ENCODE measurements at regions of chr3 and their contacts with region 1.

Region 1: GRCh38 chr3:114418724-114419543 is 125.1 kb downstream of the TIGIT start:
- DNase-seq: no peak
- H3K4me3 Mint-ChIP-seq: no peak overlapping the region
- H3K27ac Mint-ChIP-seq: peak overlapping the region; percentile 43
- H3K4me1 Mint-ChIP-seq: peaks cover 20% of the 10 kb centered on the region
- H3K27me3 Mint-ChIP-seq: peaks cover 5% of the 10 kb centered on the region

Region 2: DNA sequence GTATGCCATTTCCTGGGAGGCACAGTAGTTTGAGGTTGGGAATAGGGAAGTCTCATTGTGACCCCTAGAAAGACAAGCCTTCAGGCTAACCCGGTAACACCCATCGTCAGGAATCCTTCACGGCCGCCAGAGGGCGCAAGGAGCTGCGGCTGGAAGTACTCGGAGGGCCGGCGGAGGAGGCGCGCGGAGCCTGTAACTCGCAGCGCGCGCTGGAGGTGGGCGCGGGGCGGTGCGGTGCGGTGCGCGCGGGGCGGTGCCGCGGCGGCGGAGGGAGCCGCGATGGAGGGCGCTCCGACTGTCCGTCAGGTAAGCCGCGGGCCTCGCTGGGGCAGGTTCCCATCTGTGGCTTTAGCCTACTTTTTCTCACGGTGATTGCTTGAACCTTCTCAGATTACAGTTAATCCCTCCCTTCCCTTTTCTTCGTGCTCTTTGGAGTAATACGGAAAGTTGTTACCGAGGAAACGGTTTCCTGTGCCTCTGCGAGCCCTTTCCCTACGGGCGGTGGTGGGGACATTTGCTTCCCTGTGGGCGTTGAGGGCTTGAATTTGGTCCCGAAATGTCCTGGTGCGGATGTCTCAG is 580.2 kb before region 1 on chr3 and contains the start of gene GRAMD1C:
- intact Hi-C with region 1: loop called (anchors 2 kb)
- DNase-seq: peak; percentile 79
- H3K4me3 Mint-ChIP-seq: peak within 1 kb of the TSS; percentile 79
- H3K27ac Mint-ChIP-seq: no peak within 1 kb of the TSS
- H3K4me1 Mint-ChIP-seq: peaks cover 8% of the 10 kb centered on the region
- H3K27me3 Mint-ChIP-seq: peaks cover 12% of the 10 kb centered on the region
- total RNA-seq, gene GRAMD1C: 0.05 TPM in 1 of 2 replicates, not detected in the other

Region 3: GRCh38 chr3:114152519-114153151 is 266.3 kb before region 1 on chr3:
- intact Hi-C with region 1: loop called (anchors 1 kb)
- DNase-seq: peak; percentile 52
- H3K4me3 Mint-ChIP-seq: peak overlapping the region; percentile 21
- H3K27ac Mint-ChIP-seq: no peak overlapping the region
- H3K4me1 Mint-ChIP-seq: no peaks in the 10 kb centered on the region
- H3K27me3 Mint-ChIP-seq: peaks cover 8% of the 10 kb centered on the region

Region 4: GRCh38 chr3:114290911-114291901 is 127.7 kb before region 1 on chr3:
- intact Hi-C with region 1: loop called (anchors 1 kb)
- DNase-seq: peak; percentile 57
- H3K4me3 Mint-ChIP-seq: no peak overlapping the region
- H3K27ac Mint-ChIP-seq: peak overlapping the region; percentile 68
- H3K4me1 Mint-ChIP-seq: peaks cover 18% of the 10 kb centered on the region
- H3K27me3 Mint-ChIP-seq: no peaks in the 10 kb centered on the region

Region 5: GRCh38 chr3:114383875-114384557 is 34.9 kb before region 1 on chr3:
- intact Hi-C with region 1: loop called (anchors 1 kb)
- DNase-seq: peak; percentile 34
- H3K4me3 Mint-ChIP-seq: peak overlapping the region; percentile 63
- H3K27ac Mint-ChIP-seq: peak overlapping the region; percentile 56
- H3K4me1 Mint-ChIP-seq: peaks cover 9% of the 10 kb centered on the region
- H3K27me3 Mint-ChIP-seq: peaks cover 3% of the 10 kb centered on the region

Region 6: DNA sequence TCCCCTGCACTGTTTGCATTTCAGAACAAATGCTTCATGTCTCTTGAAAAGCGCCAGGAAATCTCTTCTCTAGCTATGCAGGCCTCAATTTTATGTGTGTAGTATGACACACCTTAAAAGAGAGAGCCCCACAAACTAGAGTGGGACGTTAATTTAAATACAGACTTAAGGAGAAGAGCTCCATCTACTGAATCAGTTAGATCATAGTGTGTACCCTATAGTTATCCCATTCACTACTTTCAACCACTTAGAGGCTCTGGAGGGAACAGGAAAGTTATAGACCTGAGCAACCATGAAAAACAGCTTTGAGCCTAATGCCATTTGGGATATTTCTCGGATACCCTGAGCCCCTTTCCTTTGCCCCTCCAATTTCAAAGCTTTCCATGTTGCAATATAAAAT is 28.6 kb after region 1 on chr3:
- intact Hi-C with region 1: no loop called
- DNase-seq: no peak
- H3K4me3 Mint-ChIP-seq: no peak overlapping the region
- H3K27ac Mint-ChIP-seq: no peak overlapping the region
- H3K4me1 Mint-ChIP-seq: no peaks in the 10 kb centered on the region
- H3K27me3 Mint-ChIP-seq: peaks cover 5% of the 10 kb centered on the region

Region 7: GRCh38 chr3:115783938-115784738 is 1365.2 kb after region 1 on chr3:
- intact Hi-C with region 1: loop called (anchors 1 kb)
- DNase-seq: peak; percentile 76
- H3K4me3 Mint-ChIP-seq: peak overlapping the region; percentile 83
- H3K27ac Mint-ChIP-seq: peak overlapping the region; percentile 95
- H3K4me1 Mint-ChIP-seq: peaks cover 12% of the 10 kb centered on the region
- H3K27me3 Mint-ChIP-seq: peaks cover 8% of the 10 kb centered on the region

Measured in activated T-helper 1 cell treated with anti-CD3 and anti-CD28 coated beads, Interleukin-12 subunit alpha, Interleukin-12 subunit beta, Interleukin-2, Interleukin-4 antibody, amounts not matched to agents 30 ng/mL and 10 ng/mL and 1 ng/mL, durations not matched to agents 14 hours and 24 hours and 36 hours (primary cell).